Transverse colon (tissue), 4 donors: ENCODE measurements at regions of chr17 and their contacts with region 1.

Region 1: GRCh38 chr17:21689604-21690003 is 2.7 kb upstream of the KCNJ18 start:
- DNase-seq: no peak
- H3K4me3 ChIP-seq: no peak overlapping the region
- H3K27ac ChIP-seq: no peak overlapping the region
- H3K4me1 ChIP-seq: no peaks in the 10 kb centered on the region
- H3K27me3 ChIP-seq: no peaks in the 10 kb centered on the region
- CTCF ChIP-seq: no peak
- EP300 ChIP-seq: no peak
- POLR2A ChIP-seq: no peak

Region 2: DNA sequence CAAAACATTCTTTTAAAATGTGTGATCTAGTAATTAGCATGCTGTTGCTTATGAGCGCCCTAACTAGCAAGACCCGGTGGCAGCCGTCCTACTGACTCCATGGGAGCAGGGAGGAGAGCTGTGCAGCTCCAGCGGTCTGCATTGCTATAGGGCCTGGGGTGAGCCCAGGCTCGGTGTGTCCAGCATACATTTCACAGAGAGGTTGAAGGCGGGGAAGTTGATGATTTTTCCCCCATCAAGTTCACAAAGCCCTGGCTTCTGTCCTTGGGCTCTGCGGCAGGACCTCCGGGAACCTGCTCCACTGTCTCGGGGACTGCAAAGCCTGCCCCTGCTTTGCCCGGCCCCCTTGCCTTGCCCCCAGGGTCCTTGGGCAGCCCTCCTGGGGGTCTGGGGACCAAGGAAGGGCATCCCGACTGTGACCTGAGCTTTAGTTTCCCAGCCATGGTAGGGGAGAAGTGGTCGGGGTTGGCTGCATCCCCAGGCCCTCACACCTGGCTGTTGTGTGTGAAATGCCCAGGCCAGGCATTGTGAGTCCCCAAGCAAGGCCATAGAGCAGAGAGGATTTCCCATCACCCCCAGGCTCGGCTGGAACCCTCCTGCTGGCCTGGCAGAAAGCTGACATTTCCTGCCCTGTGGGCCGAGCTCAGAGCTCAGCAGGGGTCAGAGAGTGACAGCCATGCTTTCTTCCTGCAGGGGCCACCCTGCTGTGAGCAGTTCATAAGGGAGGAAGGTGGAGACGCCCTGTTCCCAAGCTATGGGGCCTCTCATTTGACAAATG is 288.6 kb before region 1 on chr17:
- in situ Hi-C with region 1: loop called (anchors 5 to 10 kb)
- intact Hi-C with region 1: no loop called
- DNase-seq: no peak
- H3K4me3 ChIP-seq: no peak overlapping the region
- H3K27ac ChIP-seq: no peak overlapping the region
- H3K4me1 ChIP-seq: no peaks in the 10 kb centered on the region
- H3K27me3 ChIP-seq: no peaks in the 10 kb centered on the region
- CTCF ChIP-seq: no peak
- EP300 ChIP-seq: no peak
- POLR2A ChIP-seq: no peak